ENCODE measurements at regions of chr15 and their contacts with region 1.

Region 1: GRCh38 chr15:68559345-68560310 is 19.2 kb upstream of the CORO2B start:
- DNase-seq: no peak
- H3K4me3 ChIP-seq: peak overlapping the region; percentile 41
- H3K27me3 ChIP-seq: no peaks in the 10 kb centered on the region
- CTCF ChIP-seq: peak; percentile 93

Region 2: DNA sequence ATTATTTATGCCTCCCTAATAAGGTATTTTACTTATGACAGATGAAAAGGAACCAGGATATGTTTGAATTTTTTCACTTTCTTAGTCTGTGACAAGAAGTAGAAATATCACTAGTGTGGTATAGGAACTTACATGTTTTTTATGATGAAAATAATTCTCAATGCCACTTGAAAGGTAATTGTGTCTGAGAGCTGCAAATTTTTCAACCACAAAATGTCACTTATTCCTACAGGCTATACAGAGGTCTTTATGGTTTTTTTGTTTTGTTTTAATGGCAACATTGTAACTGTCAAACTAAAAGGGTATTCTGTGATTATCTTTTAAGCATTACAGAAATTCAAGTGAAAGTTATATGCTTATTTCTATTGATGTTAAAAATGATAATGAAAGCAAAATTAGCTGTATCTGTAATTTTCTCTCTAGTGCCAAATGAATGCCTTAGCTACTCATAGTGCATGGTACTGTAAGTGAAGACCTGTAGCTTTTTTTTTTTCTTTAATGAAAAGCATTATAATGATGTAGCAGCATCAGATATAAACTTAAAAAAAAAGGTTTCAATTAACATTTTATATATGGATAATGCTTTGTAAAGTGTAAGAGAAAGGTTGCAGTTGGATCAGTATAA is 267.4 kb before region 1 on chr15:
- CTCF ChIA-PET with region 1: no interaction called
- POLR2A ChIA-PET with region 1: no interaction called
- DNase-seq: no peak
- H3K4me3 ChIP-seq: no peak overlapping the region
- H3K27me3 ChIP-seq: no peaks in the 10 kb centered on the region
- CTCF ChIP-seq: no peak

Region 3: GRCh38 chr15:68304589-68305337 is 254.9 kb before region 1 on chr15:
- CTCF ChIA-PET with region 1: interaction called, 34 read pairs
- POLR2A ChIA-PET with region 1: no interaction called
- DNase-seq: no peak
- H3K4me3 ChIP-seq: no peak overlapping the region
- H3K27me3 ChIP-seq: no peaks in the 10 kb centered on the region
- CTCF ChIP-seq: no peak

Region 4: GRCh38 chr15:68372291-68372811 is 187.3 kb before region 1 on chr15:
- CTCF ChIA-PET with region 1: no interaction called
- POLR2A ChIA-PET with region 1: no interaction called
- DNase-seq: no peak
- H3K4me3 ChIP-seq: no peak overlapping the region
- H3K27me3 ChIP-seq: no peaks in the 10 kb centered on the region
- CTCF ChIP-seq: peak; percentile 51

Region 5: GRCh38 chr15:68578174-68578979 is 18.7 kb after region 1 on chr15:
- CTCF ChIA-PET with region 1: interaction called, 30 read pairs
- POLR2A ChIA-PET with region 1: no interaction called
- DNase-seq: no peak
- H3K4me3 ChIP-seq: peak overlapping the region; percentile 50
- H3K27me3 ChIP-seq: peaks cover 8% of the 10 kb centered on the region
- CTCF ChIP-seq: peak; percentile 51

Region 6: GRCh38 chr15:68868296-68868695 is 308.7 kb after region 1 on chr15:
- CTCF ChIA-PET with region 1: interaction called, 16 read pairs
- POLR2A ChIA-PET with region 1: no interaction called
- DNase-seq: no peak
- H3K4me3 ChIP-seq: no peak overlapping the region
- H3K27me3 ChIP-seq: peaks cover 20% of the 10 kb centered on the region
- CTCF ChIP-seq: no peak

Region 7: DNA sequence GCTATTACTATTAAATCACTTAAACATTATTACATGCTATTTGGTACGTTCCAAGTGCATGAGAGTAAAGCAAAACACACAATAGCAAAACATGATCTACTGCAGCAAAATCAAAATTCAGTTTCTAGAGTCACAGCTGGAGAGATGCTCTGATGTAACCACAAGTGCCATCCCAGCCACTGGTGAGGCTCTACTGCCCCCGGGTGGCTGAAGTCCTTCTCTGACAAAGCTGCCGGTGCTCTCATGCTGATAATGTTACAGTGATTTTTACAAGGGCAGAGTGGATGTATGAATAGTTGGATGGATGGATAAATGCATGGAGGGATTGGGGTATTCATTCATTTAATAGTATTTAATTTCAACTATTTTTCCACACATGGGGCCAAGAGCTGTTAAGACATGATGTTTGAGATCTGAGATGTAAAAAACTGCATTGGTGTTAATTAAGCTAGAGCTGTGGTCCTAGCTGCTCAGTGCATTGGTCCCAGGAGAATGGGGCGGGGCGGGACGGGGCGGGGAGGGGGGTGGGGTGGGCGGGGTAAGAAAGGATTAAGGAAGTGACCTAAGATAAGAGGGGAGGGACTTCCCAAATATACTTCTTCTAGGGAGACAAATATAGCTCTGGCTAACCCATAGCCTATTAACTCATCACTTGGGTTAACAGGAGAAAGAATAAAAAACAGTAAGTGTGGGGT is 365.4 kb after region 1 on chr15:
- CTCF ChIA-PET with region 1: interaction called, 27 read pairs
- POLR2A ChIA-PET with region 1: no interaction called
- DNase-seq: peak; percentile 13
- H3K4me3 ChIP-seq: no peak overlapping the region
- H3K27me3 ChIP-seq: peaks cover 6% of the 10 kb centered on the region
- CTCF ChIP-seq: peak; percentile 92